ENCODE measurements at regions of chr14 and their contacts with region 1.

Region 1: GRCh38 chr14:69657950-69658355 is 46.6 kb downstream of the SUSD6 start:
- DNase-seq: no peak
- H3K4me3 ChIP-seq: no peak overlapping the region
- H3K4me3 Mint-ChIP-seq: no peak overlapping the region
- H3K27ac ChIP-seq: no peak overlapping the region
- H3K27ac Mint-ChIP-seq: peak overlapping the region in 6 of 7 donors; percentile 43 to 73 (median 59)
- H3K4me1 ChIP-seq: peaks cover 27 to 36% of the 10 kb centered on the region in 2 donors
- H3K4me1 Mint-ChIP-seq: peaks cover 45% of the 10 kb centered on the region
- H3K27me3 ChIP-seq: no peaks in the 10 kb centered on the region
- H3K27me3 Mint-ChIP-seq: no peaks in the 10 kb centered on the region
- CTCF ChIP-seq: no peak

Region 2: GRCh38 chr14:69281450-69282169 is 376.3 kb before region 1 on chr14:
- intact Hi-C with region 1: no loop called
- DNase-seq: peak in 1 of 3 donors; percentile 8
- H3K4me3 ChIP-seq: no peak overlapping the region
- H3K4me3 Mint-ChIP-seq: no peak overlapping the region
- H3K27ac ChIP-seq: no peak overlapping the region
- H3K27ac Mint-ChIP-seq: no peak overlapping the region
- H3K4me1 ChIP-seq: no peaks in the 10 kb centered on the region
- H3K4me1 Mint-ChIP-seq: no peaks in the 10 kb centered on the region
- H3K27me3 ChIP-seq: no peaks in the 10 kb centered on the region
- H3K27me3 Mint-ChIP-seq: peaks cover 7 to 14% (median 10%) of the 10 kb centered on the region in 3 donors
- CTCF ChIP-seq: no peak

Region 3: DNA sequence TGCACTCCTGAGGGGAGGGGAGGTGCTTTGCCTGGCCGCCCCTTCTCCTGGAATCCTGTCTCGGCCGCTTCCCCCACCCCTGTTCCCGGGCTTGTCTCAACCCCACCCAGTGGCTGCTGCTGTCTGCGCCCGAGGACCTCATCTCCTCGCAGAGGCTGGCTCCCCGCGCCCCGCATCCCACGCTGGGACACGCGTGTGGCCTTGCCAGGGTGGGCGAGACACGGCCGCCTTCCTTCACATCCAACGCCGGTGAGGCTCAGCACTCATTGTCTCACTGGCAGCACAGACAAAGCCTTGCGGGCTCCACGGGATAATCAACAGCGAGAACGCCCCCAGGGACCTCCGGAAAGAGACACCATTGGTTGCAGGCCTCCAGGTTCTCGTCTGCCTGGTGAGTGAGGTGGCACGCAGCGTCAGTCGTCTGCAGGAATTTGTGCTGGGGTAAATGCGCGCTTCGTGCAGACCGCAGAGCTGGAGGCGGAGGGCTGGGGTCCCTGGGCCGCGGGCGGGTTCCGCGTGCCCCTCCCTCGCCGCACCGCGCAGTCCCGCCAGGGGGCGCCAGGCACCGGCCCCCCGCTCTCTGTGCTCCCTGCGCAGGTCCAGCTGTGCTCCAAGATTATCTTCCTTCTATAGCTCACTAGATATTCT is 110.1 kb before region 1 on chr14:
- intact Hi-C with region 1: no loop called
- DNase-seq: peak in 1 of 3 donors; percentile 20
- H3K4me3 ChIP-seq: no peak overlapping the region
- H3K4me3 Mint-ChIP-seq: peak overlapping the region in 1 of 2 donors; percentile 60
- H3K27ac ChIP-seq: no peak overlapping the region
- H3K27ac Mint-ChIP-seq: no peak overlapping the region
- H3K4me1 ChIP-seq: peaks cover 16 to 22% of the 10 kb centered on the region in 2 donors
- H3K4me1 Mint-ChIP-seq: peaks cover 28% of the 10 kb centered on the region
- H3K27me3 ChIP-seq: peaks cover 3 to 35% of the 10 kb centered on the region in 2 donors
- H3K27me3 Mint-ChIP-seq: peaks cover 27 to 46% (median 36%) of the 10 kb centered on the region in 3 donors
- CTCF ChIP-seq: peak; percentile 81

Region 4: DNA sequence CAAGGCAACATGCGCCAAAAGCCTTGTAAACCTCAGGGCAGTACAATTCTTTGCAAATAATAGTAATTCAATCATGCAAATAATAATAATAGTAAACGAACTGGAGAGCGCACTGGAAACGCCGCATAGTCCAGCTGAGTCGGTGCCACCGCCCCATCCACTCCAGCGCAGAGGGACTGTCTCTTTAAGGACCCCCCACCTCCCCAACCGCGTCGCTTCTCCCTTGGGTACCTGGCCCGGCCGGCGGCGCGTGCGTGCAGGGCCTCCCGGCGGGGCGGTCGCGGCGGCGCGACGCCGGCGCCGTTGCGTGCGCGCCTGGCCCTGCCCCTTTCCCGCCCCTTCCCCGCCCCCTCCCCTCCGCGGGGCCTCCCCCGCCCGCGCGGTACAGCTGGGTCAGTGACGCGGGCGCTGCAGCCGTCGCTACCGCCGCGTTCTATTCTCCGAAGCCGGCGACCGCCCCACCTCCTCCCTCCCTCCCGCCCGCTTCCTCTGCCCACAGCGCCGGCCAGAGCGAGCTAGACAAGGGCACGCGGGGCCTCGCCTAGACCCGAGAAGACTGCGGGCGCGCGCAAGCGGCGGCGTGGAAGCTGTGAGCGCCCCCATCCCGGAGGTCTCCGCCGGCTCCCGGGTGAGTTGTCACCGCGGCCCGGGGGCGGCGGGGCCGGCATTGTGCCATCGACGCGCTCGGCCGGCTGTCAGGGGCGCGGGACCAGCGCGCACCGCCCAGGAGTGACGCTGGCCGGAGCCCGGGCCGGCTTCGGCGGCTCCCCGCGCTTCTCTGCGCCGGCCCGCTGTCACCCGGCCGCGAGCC is 46.5 kb before region 1 on chr14 and contains the start of gene SUSD6:
- intact Hi-C with region 1: no loop called
- DNase-seq: peak; percentile 87 to 92 (median 91)
- H3K4me3 ChIP-seq: peak within 1 kb of the TSS; percentile 79 to 98 (median 91)
- H3K4me3 Mint-ChIP-seq: peak within 1 kb of the TSS; percentile 98 to 99
- H3K27ac ChIP-seq: peak within 1 kb of the TSS; percentile 91 to 96
- H3K27ac Mint-ChIP-seq: peak within 1 kb of the TSS; percentile 97 to 100 (median 99)
- H3K4me1 ChIP-seq: peaks cover 50 to 54% of the 10 kb centered on the region in 2 donors
- H3K4me1 Mint-ChIP-seq: peaks cover 59% of the 10 kb centered on the region
- H3K27me3 ChIP-seq: no peaks in the 10 kb centered on the region
- H3K27me3 Mint-ChIP-seq: peaks cover 0 to 2% (median 1%) of the 10 kb centered on the region in 3 donors
- CTCF ChIP-seq: no peak
- polyA plus RNA-seq, gene SUSD6: 17.3 to 81.8 (median 30.1) TPM

Region 5: GRCh38 chr14:69625299-69626131 is 32.4 kb before region 1 on chr14:
- intact Hi-C with region 1: no loop called
- DNase-seq: peak; percentile 61 to 68 (median 67)
- H3K4me3 ChIP-seq: peak overlapping the region in 1 of 3 experiments; percentile 45
- H3K4me3 Mint-ChIP-seq: peak overlapping the region; percentile 60 to 77
- H3K27ac ChIP-seq: peak overlapping the region; percentile 53 to 67
- H3K27ac Mint-ChIP-seq: peak overlapping the region; percentile 79 to 92 (median 86)
- H3K4me1 ChIP-seq: peaks cover 44 to 58% of the 10 kb centered on the region in 2 donors
- H3K4me1 Mint-ChIP-seq: peaks cover 76% of the 10 kb centered on the region
- H3K27me3 ChIP-seq: no peaks in the 10 kb centered on the region
- H3K27me3 Mint-ChIP-seq: peaks cover 0 to 2% (median 0%) of the 10 kb centered on the region in 3 donors
- CTCF ChIP-seq: no peak

Region 6: GRCh38 chr14:69693145-69693544 is 35.2 kb after region 1 on chr14:
- intact Hi-C with region 1: loop called in 1 of 2 experiments (anchors 5 kb)
- DNase-seq: peak in 2 of 3 donors; percentile 67 to 68
- H3K4me3 ChIP-seq: peak overlapping the region in 1 of 3 experiments; percentile 41
- H3K4me3 Mint-ChIP-seq: peak overlapping the region in 1 of 2 donors; percentile 62
- H3K27ac ChIP-seq: peak overlapping the region; percentile 65 to 85
- H3K27ac Mint-ChIP-seq: peak overlapping the region; percentile 82 to 95 (median 92)
- H3K4me1 ChIP-seq: peaks cover 60 to 64% of the 10 kb centered on the region in 2 donors
- H3K4me1 Mint-ChIP-seq: peaks cover 72% of the 10 kb centered on the region
- H3K27me3 ChIP-seq: no peaks in the 10 kb centered on the region
- H3K27me3 Mint-ChIP-seq: no peaks in the 10 kb centered on the region
- CTCF ChIP-seq: no peak

Region 7: DNA sequence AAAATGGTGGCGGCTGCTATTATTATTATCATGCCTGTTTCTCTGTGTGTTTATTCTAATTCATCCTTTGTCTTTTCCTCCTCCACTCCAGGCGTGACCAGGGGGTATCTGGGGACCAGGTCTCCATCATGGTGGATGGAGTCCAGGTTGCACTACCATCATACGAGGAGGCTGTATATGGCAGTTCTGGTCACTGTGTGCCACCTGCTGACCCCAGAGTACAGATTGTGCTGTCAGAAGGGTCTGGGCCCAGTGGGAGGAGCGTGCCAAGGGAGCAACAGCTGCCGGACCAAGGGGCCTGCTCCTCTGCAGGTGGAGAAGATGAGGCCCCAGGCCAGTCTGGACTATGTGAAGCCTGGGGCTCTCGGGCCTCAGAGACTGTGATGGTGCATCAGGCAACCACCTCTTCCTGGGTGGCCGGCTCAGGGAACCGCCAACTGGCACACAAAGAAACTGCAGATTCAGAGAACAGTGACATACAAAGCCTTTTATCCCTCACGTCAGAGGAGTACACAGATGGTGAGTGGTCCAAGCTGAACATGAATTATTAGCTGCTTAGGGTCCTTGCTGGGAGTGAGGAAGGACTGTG is 50.7 kb after region 1 on chr14:
- intact Hi-C with region 1: loop called (anchors 5 to 10 kb)
- DNase-seq: no peak
- H3K4me3 ChIP-seq: no peak overlapping the region
- H3K4me3 Mint-ChIP-seq: no peak overlapping the region
- H3K27ac ChIP-seq: peak overlapping the region; percentile 1 to 84
- H3K27ac Mint-ChIP-seq: peak overlapping the region; percentile 46 to 83 (median 75)
- H3K4me1 ChIP-seq: peaks cover 78 to 86% of the 10 kb centered on the region in 2 donors
- H3K4me1 Mint-ChIP-seq: peaks cover 80% of the 10 kb centered on the region
- H3K27me3 ChIP-seq: no peaks in the 10 kb centered on the region
- H3K27me3 Mint-ChIP-seq: peaks cover 0 to 2% (median 0%) of the 10 kb centered on the region in 3 donors
- CTCF ChIP-seq: peak; percentile 23